ENCODE measurements at regions of chr1 and their contacts with region 1.

Region 1: DNA sequence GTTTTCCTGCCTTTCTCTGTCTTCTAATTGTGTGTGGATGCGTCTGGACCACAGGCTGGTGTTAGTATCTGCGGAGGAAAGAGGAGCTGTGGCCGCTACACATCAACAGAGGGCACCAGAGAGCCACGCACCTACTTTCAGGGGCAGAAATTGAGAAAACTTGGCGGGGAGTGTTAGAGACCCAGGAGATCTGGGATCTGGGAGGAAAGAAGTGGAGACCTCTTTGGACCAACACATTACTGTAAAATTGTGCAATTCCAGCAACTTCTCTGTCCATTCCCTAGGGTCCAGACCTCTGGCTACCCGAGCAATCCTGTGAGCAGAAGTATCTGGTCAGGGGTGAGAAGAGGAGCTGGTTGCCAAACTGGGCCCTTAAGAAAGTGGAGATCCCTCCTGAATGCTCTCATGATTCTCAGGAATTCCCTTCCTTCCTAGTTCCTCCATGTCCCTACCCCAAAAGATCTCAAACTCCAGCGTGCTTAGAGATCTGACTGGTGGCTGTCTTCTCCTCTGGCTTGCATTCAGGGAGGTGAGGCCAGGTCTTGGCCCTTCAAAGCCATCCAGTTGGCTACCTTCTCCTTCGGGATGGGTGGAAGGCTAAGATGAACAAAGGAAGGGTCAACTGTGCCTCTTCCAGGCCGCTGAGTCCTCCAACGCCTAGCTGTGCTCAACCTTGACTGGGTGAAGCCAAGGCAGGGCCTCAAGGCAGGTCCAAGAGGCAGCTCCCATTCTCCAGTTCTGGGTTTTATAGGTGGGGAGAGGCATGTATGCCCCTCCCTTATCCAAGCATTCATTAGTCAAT is 1.2 kb upstream of the KIRREL1 start:
- DNase-seq: no peak
- H3K4me3 ChIP-seq: no peak overlapping the region
- H3K27ac ChIP-seq: no peak overlapping the region
- H3K27me3 ChIP-seq: peaks cover 4% of the 10 kb centered on the region
- CTCF ChIP-seq: peak; percentile 100

Region 2: DNA sequence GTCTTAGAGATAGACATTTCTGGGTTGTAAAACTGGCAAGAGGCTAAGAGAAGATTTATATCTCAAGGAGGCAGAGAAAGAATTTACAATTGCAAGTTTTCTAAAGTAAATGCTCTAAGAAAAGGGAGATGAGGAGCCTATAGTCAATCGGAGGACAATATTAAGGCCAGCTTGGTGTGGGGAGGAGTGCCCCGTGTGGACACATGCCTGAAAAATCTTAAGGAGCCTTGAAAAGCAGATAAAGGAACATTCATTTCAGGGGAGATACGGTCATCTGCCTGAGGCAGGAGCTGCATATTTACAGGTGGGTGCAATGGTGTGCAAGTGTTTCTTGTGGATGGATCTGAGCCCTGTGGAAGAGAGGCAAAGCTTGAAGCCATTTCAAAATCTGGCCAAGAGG is 240.9 kb before region 1 on chr1:
- CTCF ChIA-PET with region 1: no interaction called
- POLR2A ChIA-PET with region 1: no interaction called
- DNase-seq: no peak
- H3K4me3 ChIP-seq: no peak overlapping the region
- H3K27ac ChIP-seq: no peak overlapping the region
- H3K27me3 ChIP-seq: no peaks in the 10 kb centered on the region
- CTCF ChIP-seq: no peak

Region 3: GRCh38 chr1:157969697-157970485 is 22.3 kb before region 1 on chr1:
- CTCF ChIA-PET with region 1: interaction called, 108 read pairs
- POLR2A ChIA-PET with region 1: no interaction called
- DNase-seq: peak; percentile 65
- H3K4me3 ChIP-seq: no peak overlapping the region
- H3K27ac ChIP-seq: peak overlapping the region; percentile 94
- H3K27me3 ChIP-seq: peaks cover 3% of the 10 kb centered on the region
- CTCF ChIP-seq: peak; percentile 98

Region 4: GRCh38 chr1:158013840-158014730 is 21.9 kb after region 1 on chr1:
- CTCF ChIA-PET with region 1: interaction called, 26 read pairs
- POLR2A ChIA-PET with region 1: interaction called, 25 read pairs
- DNase-seq: no peak
- H3K4me3 ChIP-seq: no peak overlapping the region
- H3K27ac ChIP-seq: peak overlapping the region; percentile 52
- H3K27me3 ChIP-seq: no peaks in the 10 kb centered on the region
- CTCF ChIP-seq: no peak

Region 5: GRCh38 chr1:158045639-158046038 is 53.4 kb after region 1 on chr1:
- CTCF ChIA-PET with region 1: interaction called, 65 read pairs
- POLR2A ChIA-PET with region 1: no interaction called
- DNase-seq: peak; percentile 42
- H3K4me3 ChIP-seq: no peak overlapping the region
- H3K27ac ChIP-seq: no peak overlapping the region
- H3K27me3 ChIP-seq: no peaks in the 10 kb centered on the region
- CTCF ChIP-seq: no peak

Region 6: GRCh38 chr1:158087320-158087927 is 95.2 kb after region 1 on chr1:
- CTCF ChIA-PET with region 1: interaction called, 247 read pairs
- POLR2A ChIA-PET with region 1: interaction called, 4 read pairs
- DNase-seq: peak; percentile 57
- H3K4me3 ChIP-seq: no peak overlapping the region
- H3K27ac ChIP-seq: no peak overlapping the region
- H3K27me3 ChIP-seq: no peaks in the 10 kb centered on the region
- CTCF ChIP-seq: peak; percentile 98

Region 7: DNA sequence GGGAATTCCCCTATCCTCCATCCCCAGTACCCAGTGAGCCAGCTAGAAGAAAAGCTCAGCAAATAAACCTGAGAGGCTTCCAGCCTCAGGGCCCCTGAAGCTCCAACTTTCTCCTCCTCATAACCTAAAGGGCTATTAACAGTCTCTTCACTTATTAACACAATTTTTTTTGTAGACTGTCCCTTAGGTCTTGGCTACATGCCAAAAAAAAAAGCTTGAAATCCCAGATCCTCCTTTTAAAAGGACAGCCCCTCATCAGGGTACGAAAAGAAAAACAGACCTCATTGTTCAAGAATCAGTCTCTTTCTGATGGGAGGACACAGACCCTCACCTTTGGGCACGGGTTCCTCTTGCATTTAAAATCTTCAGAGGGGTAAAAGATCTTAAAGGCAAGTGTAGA is 115.7 kb after region 1 on chr1:
- CTCF ChIA-PET with region 1: interaction called, 590 read pairs
- POLR2A ChIA-PET with region 1: interaction called, 4 read pairs
- DNase-seq: no peak
- H3K4me3 ChIP-seq: no peak overlapping the region
- H3K27ac ChIP-seq: no peak overlapping the region
- H3K27me3 ChIP-seq: peaks cover 12% of the 10 kb centered on the region
- CTCF ChIP-seq: no peak

Measured in AG04450 (cell line).